ENCODE measurements at regions of chr11 and their contacts with region 1.

Region 1: DNA sequence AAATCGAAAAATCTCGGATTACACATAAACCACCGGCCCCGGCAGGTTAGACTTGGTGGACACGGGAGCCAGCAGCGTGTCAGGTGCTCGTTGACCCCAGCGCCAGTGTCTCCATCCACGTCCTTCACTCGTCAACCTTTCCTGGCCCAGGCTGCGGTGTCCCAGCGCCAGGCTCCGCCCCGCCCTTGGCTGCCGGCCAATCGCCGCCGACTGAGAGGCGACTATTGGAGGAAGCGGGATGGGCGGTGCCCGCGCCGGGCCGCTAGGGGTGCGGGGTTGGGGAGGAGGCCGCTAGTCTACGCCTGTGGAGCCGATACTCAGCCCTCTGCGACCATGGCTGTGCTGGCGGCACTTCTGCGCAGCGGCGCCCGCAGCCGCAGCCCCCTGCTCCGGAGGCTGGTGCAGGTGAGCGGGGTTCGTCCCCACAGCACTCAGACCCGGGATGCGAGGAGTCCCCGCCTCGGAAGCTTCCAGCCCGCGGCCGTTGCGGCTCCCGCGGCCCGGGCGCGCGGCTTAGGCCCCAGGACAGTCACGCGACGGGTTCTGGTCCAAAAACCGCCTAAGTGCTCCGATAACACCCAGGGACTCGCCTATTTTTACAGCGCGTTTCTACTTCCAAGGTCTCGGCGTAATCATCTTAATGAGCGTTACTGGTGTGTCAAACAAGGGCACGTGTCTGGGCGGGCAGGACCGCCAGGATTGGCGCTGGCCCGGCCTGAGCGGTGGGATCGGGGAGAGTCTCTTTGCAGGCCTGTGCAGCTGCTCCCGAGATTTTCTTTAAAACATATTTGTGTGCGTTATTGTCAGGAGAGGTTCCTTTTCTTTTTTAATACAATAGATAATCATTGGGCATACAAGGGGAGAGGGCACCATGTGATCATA is at the start of gene ACAT1:
- DNase-seq: peak; percentile 94
- H3K4me3 ChIP-seq: peak within 1 kb of the TSS; percentile 78
- H3K27ac ChIP-seq: peak within 1 kb of the TSS; percentile 43
- H3K4me1 ChIP-seq: peaks cover 35% of the 10 kb centered on the region
- CTCF ChIP-seq: no peak
- total RNA-seq, gene ACAT1: 69.8 and 83.2 TPM in 2 replicates

Region 2: GRCh38 chr11:107526197-107526596 is 595.3 kb before region 1 on chr11:
- CTCF ChIA-PET with region 1: no interaction called
- POLR2A ChIA-PET with region 1: no interaction called
- intact Hi-C with region 1: no loop called
- DNase-seq: no peak
- H3K4me3 ChIP-seq: no peak overlapping the region
- H3K27ac ChIP-seq: no peak overlapping the region
- H3K4me1 ChIP-seq: no peaks in the 10 kb centered on the region
- CTCF ChIP-seq: no peak

Region 3: DNA sequence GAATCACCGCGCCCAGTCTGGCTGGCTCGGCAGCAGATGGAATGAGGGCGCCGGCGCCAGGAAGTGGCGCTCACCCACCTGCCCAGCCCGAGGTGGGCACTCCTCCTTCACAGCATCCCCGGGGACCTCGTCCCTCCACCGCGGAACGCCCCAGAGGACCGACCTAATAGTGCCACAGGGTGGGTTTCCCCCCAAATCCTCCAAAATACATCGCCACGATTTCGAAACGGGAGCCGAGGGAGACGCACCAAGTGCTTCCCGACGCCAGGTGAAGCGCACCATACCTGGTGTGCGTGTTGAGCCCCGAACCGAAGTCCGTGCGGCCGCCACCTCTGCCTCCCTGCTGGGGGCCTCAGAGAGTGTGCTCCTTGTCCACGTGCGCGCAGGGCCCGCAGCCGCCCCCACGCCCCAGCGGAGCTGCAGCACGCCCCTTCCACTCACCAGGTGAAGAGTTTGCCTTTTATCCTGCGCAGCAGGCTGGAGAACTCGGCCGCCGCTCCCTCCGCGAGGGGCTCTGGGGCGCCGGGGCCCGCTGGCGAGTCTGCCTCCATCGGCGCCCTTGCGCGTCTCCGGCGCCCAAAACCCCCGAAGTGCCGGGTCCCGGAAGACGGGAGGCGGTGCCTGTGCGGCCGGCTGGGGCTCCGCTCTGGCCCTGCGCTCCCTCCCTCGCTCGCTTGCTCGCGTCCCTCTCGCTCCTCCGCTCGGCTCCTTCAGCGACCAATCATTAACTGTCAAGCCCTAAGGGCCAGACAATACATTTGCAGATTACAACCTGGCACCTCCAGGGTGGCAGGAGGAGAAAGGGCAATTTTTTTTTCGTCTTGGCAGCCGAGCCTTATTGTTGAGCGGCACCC is 263.1 kb before region 1 on chr11 and contains the start of gene SLC35F2:
- CTCF ChIA-PET with region 1: no interaction called
- POLR2A ChIA-PET with region 1: no interaction called
- intact Hi-C with region 1: loop called (anchors 5 kb)
- DNase-seq: peak; percentile 91
- H3K4me3 ChIP-seq: peak within 1 kb of the TSS; percentile 85
- H3K27ac ChIP-seq: peak within 1 kb of the TSS; percentile 62
- H3K4me1 ChIP-seq: peaks cover 18% of the 10 kb centered on the region
- CTCF ChIP-seq: peak; percentile 54
- total RNA-seq, gene SLC35F2: 20.9 and 23.3 TPM in 2 replicates

Region 4: DNA sequence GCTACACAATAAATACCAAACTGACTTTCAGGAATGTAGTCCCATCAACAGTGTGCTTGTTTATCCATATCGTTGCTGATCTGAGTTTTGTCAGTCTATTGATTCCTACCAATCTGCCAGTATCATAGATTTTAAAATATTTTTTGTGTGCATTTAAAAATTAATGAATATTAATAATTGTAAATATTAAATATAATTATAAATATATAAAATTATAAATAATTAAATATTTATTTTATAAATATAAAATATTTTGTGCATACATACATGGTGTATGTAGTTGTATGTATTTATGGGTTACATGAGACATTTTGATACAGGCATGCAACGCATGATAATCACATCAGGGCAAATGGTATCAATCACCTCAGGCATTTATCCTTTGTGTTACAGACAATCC is 59.2 kb before region 1 on chr11:
- CTCF ChIA-PET with region 1: no interaction called
- POLR2A ChIA-PET with region 1: no interaction called
- intact Hi-C with region 1: no loop called
- DNase-seq: no peak
- H3K4me3 ChIP-seq: no peak overlapping the region
- H3K27ac ChIP-seq: no peak overlapping the region
- H3K4me1 ChIP-seq: no peaks in the 10 kb centered on the region
- CTCF ChIP-seq: no peak

Region 5: DNA sequence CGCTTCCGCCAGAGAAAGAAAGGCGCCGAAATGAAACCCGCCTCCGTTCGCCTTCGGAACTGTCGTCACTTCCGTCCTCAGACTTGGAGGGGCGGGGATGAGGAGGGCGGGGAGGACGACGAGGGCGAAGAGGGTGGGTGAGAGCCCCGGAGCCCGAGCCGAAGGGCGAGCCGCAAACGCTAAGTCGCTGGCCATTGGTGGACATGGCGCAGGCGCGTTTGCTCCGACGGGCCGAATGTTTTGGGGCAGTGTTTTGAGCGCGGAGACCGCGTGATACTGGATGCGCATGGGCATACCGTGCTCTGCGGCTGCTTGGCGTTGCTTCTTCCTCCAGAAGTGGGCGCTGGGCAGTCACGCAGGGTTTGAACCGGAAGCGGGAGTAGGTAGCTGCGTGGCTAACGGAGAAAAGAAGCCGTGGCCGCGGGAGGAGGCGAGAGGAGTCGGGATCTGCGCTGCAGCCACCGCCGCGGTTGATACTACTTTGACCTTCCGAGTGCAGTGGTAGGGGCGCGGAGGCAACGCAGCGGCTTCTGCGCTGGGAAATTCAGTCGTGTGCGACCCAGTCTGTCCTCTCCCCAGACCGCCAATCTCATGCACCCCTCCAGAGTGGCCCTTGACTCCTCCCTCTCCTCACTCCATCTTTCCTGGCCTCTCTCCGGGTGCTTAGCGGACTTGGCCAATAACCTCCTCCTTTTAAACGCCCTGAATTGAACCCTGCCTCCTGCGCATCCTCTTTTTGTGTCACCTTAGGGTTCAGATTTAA is 101.4 kb after region 1 on chr11 and contains the start of gene ATM:
- CTCF ChIA-PET with region 1: no interaction called
- POLR2A ChIA-PET with region 1: no interaction called
- intact Hi-C with region 1: loop called (anchors 1 kb)
- DNase-seq: peak; percentile 98
- H3K4me3 ChIP-seq: peak within 1 kb of the TSS; percentile 93
- H3K27ac ChIP-seq: peak within 1 kb of the TSS; percentile 90
- H3K4me1 ChIP-seq: peaks cover 40% of the 10 kb centered on the region
- CTCF ChIP-seq: peak; percentile 79
- total RNA-seq, gene ATM: 125 and 147 TPM in 2 replicates

Region 6: DNA sequence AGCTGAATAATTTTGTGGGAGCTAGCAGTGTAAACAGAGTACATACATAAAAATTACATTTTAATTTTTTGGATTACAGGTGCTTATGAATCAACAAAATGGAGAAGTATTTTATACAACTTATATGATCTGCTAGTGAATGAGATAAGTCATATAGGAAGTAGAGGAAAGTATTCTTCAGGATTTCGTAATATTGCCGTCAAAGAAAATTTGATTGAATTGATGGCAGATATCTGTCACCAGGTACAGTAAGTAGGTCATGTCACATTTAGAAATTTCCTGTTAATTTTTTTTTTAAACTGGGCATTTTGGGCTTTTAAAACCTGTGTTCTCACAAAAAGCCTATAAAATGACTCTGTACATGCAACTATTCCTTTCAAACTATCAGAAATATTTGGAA is 125.4 kb after region 1 on chr11:
- CTCF ChIA-PET with region 1: no interaction called
- POLR2A ChIA-PET with region 1: no interaction called
- intact Hi-C with region 1: no loop called
- DNase-seq: no peak
- H3K4me3 ChIP-seq: no peak overlapping the region
- H3K27ac ChIP-seq: no peak overlapping the region
- H3K4me1 ChIP-seq: no peaks in the 10 kb centered on the region
- CTCF ChIP-seq: no peak

Region 7: DNA sequence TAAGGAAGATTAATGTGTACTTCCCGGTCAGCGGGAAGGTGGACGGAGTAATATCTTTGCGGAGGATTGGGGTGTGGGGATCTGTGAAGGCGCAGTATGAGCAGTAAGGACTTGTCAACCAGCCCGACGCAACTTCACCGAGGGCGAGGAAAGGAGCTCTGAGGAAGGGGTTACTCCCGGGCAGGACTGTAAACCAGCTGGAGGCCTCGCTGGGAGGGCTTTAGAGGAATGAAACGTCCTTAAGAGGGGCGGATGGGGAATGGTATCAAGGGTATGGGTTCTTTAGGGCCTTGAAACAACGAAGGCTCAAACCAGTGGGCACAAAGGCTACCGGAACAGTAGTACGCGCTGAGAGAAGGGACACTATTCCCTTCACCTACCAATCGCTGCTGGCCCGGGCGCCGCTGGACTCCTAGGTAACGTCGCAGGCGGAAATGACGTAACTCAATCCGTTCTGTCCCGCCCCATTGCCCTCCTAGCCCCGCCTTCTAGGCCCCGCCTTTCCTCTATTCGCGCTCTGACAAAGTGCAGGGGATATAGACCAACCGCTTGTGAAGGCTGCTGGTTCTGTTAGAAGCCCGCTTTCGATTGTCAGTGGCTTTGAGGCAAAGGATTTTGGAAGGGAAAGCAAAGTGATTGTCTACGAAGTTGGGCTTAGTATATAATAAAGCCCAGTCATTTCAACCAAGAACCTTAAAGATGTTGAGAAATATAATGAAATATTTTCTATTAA is 345.7 kb after region 1 on chr11 and contains the start of gene C11orf65:
- CTCF ChIA-PET with region 1: no interaction called
- POLR2A ChIA-PET with region 1: no interaction called
- intact Hi-C with region 1: loop called (anchors 2 kb)
- DNase-seq: peak; percentile 95
- H3K4me3 ChIP-seq: peak within 1 kb of the TSS; percentile 89
- H3K27ac ChIP-seq: peak within 1 kb of the TSS; percentile 35
- H3K4me1 ChIP-seq: peaks cover 11% of the 10 kb centered on the region
- CTCF ChIP-seq: no peak
- total RNA-seq, gene C11orf65: 0.15 and 0.98 TPM in 2 replicates

Region 8: DNA sequence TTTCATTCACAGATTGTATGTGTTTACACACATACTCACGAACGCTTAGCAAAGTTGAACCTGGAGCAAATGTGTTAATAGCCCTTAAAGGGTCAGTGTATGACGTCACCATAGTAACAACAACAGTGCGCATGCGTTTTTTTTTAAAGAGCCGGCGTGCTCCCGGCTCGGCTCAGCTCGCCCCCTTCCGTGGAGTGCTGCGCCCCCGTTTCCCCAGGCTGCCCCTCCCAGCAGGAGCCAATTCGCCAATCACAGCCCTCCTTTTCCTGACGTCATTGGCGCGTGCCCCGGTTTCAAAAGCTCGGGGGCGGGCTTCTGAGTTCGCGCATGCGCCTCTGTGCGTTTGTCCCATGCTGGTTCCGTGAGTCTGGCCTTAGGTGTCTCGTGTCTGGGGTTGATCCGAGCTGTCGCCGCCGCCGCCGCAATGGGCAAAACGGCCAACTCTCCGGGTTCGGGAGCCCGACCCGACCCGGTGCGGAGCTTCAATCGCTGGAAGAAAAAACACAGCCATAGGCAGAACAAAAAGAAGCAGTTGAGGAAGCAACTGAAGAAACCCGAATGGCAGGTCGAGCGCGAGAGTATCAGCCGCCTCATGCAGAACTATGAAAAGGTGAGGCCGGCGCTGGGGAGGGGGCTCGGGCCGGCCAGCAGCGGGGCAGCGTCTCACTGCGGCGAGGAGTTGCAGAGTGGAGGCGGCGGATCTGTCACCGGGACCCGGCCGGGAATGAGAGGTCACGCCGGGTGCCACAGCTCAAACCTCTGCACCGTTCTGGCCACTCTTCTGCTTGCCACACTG is 543.4 kb after region 1 on chr11 and contains the start of gene DDX10:
- CTCF ChIA-PET with region 1: no interaction called
- POLR2A ChIA-PET with region 1: no interaction called
- intact Hi-C with region 1: loop called (anchors 5 kb)
- DNase-seq: peak; percentile 98
- H3K4me3 ChIP-seq: peak within 1 kb of the TSS; percentile 95
- H3K27ac ChIP-seq: peak within 1 kb of the TSS; percentile 88
- H3K4me1 ChIP-seq: peaks cover 67% of the 10 kb centered on the region
- CTCF ChIP-seq: peak; percentile 23; the same call in 1 of the 2 replicates
- total RNA-seq, gene DDX10: 38.0 and 46.5 TPM in 2 replicates

Measured in OCI-LY7 (cell line).